Caco-2 (cell line): ENCODE measurements at regions of chr4 and their contacts with region 1.

Region 1: GRCh38 chr4:143095447-143095846 is 89.3 kb upstream of the USP38 start:
- DNase-seq: peak; percentile 73 to 80
- H3K4me3 ChIP-seq: no peak overlapping the region
- H3K4me3 Mint-ChIP-seq: peak overlapping the region; percentile 22
- H3K27ac Mint-ChIP-seq: peak overlapping the region; percentile 76
- H3K4me1 ChIP-seq: peaks cover 45% of the 10 kb centered on the region
- H3K4me1 Mint-ChIP-seq: peaks cover 37% of the 10 kb centered on the region
- H3K27me3 ChIP-seq: no peaks in the 10 kb centered on the region
- H3K27me3 Mint-ChIP-seq: no peaks in the 10 kb centered on the region
- CTCF ChIP-seq: no peak

Region 2: GRCh38 chr4:143076723-143077122 is 18.7 kb before region 1 on chr4:
- CTCF ChIA-PET with region 1: no interaction called
- POLR2A ChIA-PET with region 1: no interaction called
- intact Hi-C with region 1: loop called (anchors 1 kb)
- DNase-seq: peak; percentile 53 to 69
- H3K4me3 ChIP-seq: no peak overlapping the region
- H3K4me3 Mint-ChIP-seq: peak overlapping the region; percentile 60
- H3K27ac Mint-ChIP-seq: no peak overlapping the region
- H3K4me1 ChIP-seq: peaks cover 18% of the 10 kb centered on the region
- H3K4me1 Mint-ChIP-seq: peaks cover 14% of the 10 kb centered on the region
- H3K27me3 ChIP-seq: no peaks in the 10 kb centered on the region
- H3K27me3 Mint-ChIP-seq: no peaks in the 10 kb centered on the region
- CTCF ChIP-seq: no peak

Region 3: GRCh38 chr4:143178923-143179322 is 83.5 kb after region 1 on chr4:
- CTCF ChIA-PET with region 1: no interaction called
- POLR2A ChIA-PET with region 1: interaction called, 6 read pairs
- intact Hi-C with region 1: loop called (anchors 1 kb)
- DNase-seq: peak; percentile 44 to 68
- H3K4me3 ChIP-seq: no peak overlapping the region
- H3K4me3 Mint-ChIP-seq: no peak overlapping the region
- H3K27ac Mint-ChIP-seq: no peak overlapping the region
- H3K4me1 ChIP-seq: peaks cover 17% of the 10 kb centered on the region
- H3K4me1 Mint-ChIP-seq: peaks cover 14% of the 10 kb centered on the region
- H3K27me3 ChIP-seq: no peaks in the 10 kb centered on the region
- H3K27me3 Mint-ChIP-seq: no peaks in the 10 kb centered on the region
- CTCF ChIP-seq: peak in 1 of 2 experiments; percentile 32

Region 4: DNA sequence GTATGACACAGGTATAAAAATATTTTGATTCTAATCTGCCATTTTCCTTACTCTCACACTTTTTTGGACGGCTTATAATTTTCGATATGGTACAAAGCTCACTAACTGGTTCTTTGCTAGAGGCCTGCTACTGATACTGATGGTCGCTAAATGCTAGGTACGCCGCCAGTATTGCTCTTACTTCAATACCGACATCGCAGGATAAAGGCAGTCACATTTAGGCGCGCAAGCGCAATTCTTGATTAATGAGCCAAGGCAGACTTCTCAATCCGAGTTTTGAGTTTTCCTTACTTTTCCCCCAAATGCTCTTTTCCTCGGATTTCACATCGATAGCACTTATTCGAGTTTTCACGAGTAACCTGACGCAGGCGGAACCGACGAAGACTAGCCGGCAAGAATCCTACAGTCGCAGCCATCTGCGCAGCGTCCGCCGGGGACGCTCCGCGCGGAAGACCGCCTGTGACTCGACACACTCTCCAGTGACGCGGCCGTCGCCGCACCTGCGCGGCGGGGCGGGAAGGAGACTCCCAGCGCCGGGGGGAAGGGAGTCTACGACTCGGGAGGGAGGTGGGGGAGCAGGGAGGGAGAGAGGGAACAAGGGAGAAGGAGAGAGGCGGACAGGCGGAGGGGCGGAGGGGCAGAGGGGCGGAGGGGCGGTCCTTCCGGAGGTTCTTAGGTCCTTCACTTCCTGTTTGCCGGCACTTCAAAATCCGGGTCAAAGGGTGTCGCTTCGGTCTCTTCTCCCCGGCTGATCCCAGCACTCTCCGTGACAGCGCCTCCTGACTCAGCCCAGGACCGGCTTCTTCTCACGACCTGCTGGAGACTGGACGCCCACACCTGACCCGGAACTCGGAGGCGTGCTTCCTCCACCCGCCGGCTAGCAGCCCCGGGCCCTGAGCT is 89.0 kb after region 1 on chr4 and contains the start of gene USP38:
- CTCF ChIA-PET with region 1: no interaction called
- POLR2A ChIA-PET with region 1: interaction called, 6 read pairs
- intact Hi-C with region 1: loop called (anchors 1 kb)
- DNase-seq: peak; percentile 93 to 97
- H3K4me3 ChIP-seq: peak within 1 kb of the TSS; percentile 96
- H3K4me3 Mint-ChIP-seq: peak within 1 kb of the TSS; percentile 89
- H3K27ac Mint-ChIP-seq: peak within 1 kb of the TSS; percentile 96
- H3K4me1 ChIP-seq: peaks cover 13% of the 10 kb centered on the region; the same call in 1 of the 2 replicates
- H3K4me1 Mint-ChIP-seq: peaks cover 27% of the 10 kb centered on the region
- H3K27me3 ChIP-seq: no peaks in the 10 kb centered on the region
- H3K27me3 Mint-ChIP-seq: no peaks in the 10 kb centered on the region
- CTCF ChIP-seq: peak in 1 of 2 experiments; percentile 13
- total RNA-seq, gene USP38: 19.8 and 22.7 TPM in 2 replicates

Region 5: DNA sequence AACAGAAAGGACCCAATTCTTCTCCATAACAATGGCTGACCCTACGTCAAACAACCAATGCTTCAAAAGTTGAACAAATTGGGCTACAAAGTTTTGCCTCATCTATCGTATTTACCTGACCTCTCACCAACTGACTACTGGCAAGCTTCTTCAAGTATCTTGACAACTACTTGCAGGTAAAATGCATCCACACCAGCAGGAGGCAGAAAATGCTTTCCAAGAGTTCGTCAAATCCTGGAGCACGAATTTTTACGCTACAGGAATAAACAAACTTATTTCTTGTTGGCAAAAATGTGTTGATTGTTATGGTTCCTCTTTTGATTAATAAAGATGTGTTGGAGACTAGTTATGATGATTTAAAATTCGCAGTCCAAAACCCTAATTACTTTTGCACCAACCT is 234.5 kb after region 1 on chr4:
- CTCF ChIA-PET with region 1: no interaction called
- POLR2A ChIA-PET with region 1: no interaction called
- intact Hi-C with region 1: loop called (anchors 5 kb)
- DNase-seq: no peak
- H3K4me3 ChIP-seq: no peak overlapping the region
- H3K4me3 Mint-ChIP-seq: no peak overlapping the region
- H3K27ac Mint-ChIP-seq: no peak overlapping the region
- H3K4me1 ChIP-seq: peaks cover 32% of the 10 kb centered on the region
- H3K4me1 Mint-ChIP-seq: peaks cover 18% of the 10 kb centered on the region
- H3K27me3 ChIP-seq: no peaks in the 10 kb centered on the region
- H3K27me3 Mint-ChIP-seq: no peaks in the 10 kb centered on the region
- CTCF ChIP-seq: no peak

Region 6: GRCh38 chr4:143513306-143514168 is 418.1 kb after region 1 on chr4 and contains the start of gene SMARCA5:
- CTCF ChIA-PET with region 1: no interaction called
- POLR2A ChIA-PET with region 1: no interaction called
- intact Hi-C with region 1: loop called (anchors 2 kb)
- DNase-seq: peak; percentile 96 to 98
- H3K4me3 ChIP-seq: peak within 1 kb of the TSS; percentile 97
- H3K4me3 Mint-ChIP-seq: peak within 1 kb of the TSS; percentile 96
- H3K27ac Mint-ChIP-seq: peak within 1 kb of the TSS; percentile 96
- H3K4me1 ChIP-seq: 0 out of 2 replicates have a peak, but pooled peaks cover 10% of the 10 kb centered on the region
- H3K4me1 Mint-ChIP-seq: peaks cover 6% of the 10 kb centered on the region
- H3K27me3 ChIP-seq: no peaks in the 10 kb centered on the region
- H3K27me3 Mint-ChIP-seq: no peaks in the 10 kb centered on the region
- CTCF ChIP-seq: no peak
- total RNA-seq, gene SMARCA5: 64.5 and 64.8 TPM in 2 replicates